CD4-positive, alpha-beta memory T cell (primary cell): ENCODE measurements at regions of chr22 and their contacts with region 1.

Region 1: DNA sequence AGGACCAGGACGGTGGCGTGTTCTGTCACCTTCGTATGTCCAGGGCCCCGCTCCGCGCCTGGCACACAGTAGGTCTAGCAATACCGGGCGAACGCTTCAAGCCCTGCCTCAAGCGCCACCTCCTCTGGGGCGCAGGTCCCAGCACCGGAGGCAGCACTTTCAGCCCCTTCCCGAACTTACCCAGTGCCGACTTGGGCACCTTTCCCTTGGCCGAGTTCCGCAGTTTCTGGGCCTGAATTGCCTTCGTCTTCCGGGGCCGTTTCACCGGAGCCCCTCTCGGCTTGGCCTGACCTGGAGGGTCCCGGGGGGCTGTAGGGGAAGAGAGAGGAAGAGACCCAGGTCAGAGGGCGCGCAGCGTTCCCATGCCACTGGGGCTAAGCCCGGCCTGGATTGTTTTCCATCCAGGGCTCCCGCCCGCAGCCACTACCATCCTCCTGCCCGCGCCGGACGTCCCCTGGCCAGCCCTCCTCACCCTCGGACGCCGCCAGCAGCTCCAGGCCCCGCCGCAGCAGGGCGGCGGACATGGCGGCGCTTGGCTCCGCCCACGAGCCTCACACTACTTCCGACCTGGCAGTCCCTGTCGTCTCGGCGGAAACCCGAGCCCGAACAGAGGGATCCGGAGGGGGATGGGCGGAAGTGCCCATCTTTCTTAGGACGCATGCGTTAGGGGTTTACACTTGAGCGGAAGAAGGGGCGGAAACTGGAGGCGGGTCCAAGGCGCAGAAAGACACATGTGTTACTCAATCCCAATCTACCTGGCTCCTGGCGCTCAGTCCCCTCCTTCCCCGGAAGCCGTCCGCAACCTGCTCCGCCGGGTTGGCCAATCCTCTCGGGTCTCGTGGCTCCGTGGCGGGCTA is at the start of gene RPS19BP1:
- DNase-seq: peak; percentile 98 to 100 (median 99)
- H3K4me3 ChIP-seq: peak within 1 kb of the TSS; percentile 71 to 91
- H3K4me3 Mint-ChIP-seq: peak within 1 kb of the TSS; percentile 92 to 98 (median 96)
- H3K27ac ChIP-seq: peak within 1 kb of the TSS; percentile 93
- H3K27ac Mint-ChIP-seq: peak within 1 kb of the TSS; percentile 93 to 100 (median 97)
- H3K4me1 ChIP-seq: peaks cover 56% of the 10 kb centered on the region
- H3K4me1 Mint-ChIP-seq: peaks cover 35 to 61% (median 51%) of the 10 kb centered on the region in 4 donors
- H3K27me3 ChIP-seq: no peaks in the 10 kb centered on the region
- H3K27me3 Mint-ChIP-seq: no peaks in the 10 kb centered on the region
- total RNA-seq, gene RPS19BP1: 66.9 to 67.1 TPM

Region 2: DNA sequence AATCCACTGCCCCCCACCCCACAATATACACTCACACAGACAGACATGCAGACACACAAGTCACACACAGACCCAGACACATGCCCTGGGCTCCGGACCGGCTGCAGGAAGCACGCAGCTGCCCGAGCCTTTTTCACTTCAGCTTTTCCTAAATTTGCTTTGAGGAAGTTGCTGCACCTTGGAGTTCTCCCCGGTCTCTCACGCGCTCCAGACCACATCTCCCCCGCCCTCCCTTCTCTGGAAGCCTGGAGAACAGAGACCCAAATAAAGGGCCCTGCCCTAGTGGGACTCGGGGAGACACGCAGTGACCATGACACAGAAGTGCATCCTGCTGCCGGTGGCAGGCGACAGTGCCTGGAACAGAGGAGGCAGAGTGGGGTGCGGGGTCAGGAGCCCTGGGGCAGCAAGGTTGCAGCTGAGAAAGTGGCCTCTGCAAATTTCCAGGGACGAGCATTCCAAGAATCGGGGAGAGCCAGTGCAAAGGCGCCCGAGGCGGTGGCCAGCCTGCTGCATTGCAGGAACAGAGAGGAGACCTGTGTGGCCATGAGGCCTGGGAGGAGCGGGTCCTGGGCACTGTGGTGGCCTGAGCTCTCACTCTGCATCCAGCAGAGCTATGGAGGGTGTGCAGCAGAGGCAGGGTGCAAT is 232.1 kb before region 1 on chr22:
- CTCF ChIA-PET with region 1: no interaction called
- POLR2A ChIA-PET with region 1: no interaction called
- intact Hi-C with region 1: no loop called
- DNase-seq: no peak
- H3K4me3 ChIP-seq: no peak overlapping the region
- H3K4me3 Mint-ChIP-seq: no peak overlapping the region
- H3K27ac ChIP-seq: no peak overlapping the region
- H3K27ac Mint-ChIP-seq: no peak overlapping the region
- H3K4me1 ChIP-seq: peaks cover 6% of the 10 kb centered on the region
- H3K4me1 Mint-ChIP-seq: peaks cover 2 to 12% (median 7%) of the 10 kb centered on the region in 4 donors
- H3K27me3 ChIP-seq: no peaks in the 10 kb centered on the region
- H3K27me3 Mint-ChIP-seq: peaks cover 15 to 20% of the 10 kb centered on the region in 2 donors

Region 3: DNA sequence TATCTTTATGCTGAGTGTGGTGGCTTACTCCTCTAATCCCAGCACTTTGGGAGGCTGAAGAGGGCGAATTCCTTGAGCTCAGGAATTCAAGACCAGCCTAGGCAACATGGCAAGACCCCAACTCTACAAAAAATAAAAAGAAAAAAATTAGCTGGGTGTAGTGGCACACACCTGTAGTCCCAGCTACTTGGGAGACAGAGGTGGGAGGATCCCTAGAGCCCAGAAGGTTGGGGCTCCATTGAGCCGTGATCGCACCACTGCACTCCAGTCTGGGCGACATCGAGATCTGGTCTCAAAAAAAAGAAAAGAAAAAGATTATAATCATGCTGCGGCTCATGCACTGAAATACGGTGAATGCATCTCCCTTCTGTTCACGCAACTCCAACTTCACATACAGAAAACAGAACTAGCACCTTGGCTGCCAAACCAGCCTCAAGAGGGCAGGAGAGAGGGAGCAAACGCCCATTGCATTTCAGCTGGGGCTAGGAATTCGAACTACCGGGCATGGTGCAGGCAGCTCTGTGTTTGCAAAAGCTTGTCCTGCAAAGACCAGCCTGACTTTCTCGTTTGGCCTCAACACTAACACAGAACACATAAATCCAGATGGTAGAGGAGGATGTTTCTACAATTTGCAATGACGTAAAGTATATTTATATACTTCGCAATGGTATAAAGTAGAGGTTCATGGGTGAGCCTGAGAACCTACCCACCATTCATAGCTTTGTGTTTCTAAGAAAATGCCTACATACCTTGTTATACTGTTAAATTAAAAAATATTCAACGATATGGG is 189.0 kb before region 1 on chr22:
- CTCF ChIA-PET with region 1: interaction called, 21 read pairs
- POLR2A ChIA-PET with region 1: interaction called, 7 read pairs
- intact Hi-C with region 1: loop called (anchors 1 kb)
- DNase-seq: peak; percentile 40 to 56 (median 46)
- H3K4me3 ChIP-seq: no peak overlapping the region
- H3K4me3 Mint-ChIP-seq: no peak overlapping the region
- H3K27ac ChIP-seq: no peak overlapping the region
- H3K27ac Mint-ChIP-seq: no peak overlapping the region
- H3K4me1 ChIP-seq: peaks cover 5% of the 10 kb centered on the region
- H3K4me1 Mint-ChIP-seq: peaks cover 4 to 5% (median 4%) of the 10 kb centered on the region in 4 donors
- H3K27me3 ChIP-seq: no peaks in the 10 kb centered on the region
- H3K27me3 Mint-ChIP-seq: peaks cover 5 to 7% of the 10 kb centered on the region in 2 donors

Region 4: DNA sequence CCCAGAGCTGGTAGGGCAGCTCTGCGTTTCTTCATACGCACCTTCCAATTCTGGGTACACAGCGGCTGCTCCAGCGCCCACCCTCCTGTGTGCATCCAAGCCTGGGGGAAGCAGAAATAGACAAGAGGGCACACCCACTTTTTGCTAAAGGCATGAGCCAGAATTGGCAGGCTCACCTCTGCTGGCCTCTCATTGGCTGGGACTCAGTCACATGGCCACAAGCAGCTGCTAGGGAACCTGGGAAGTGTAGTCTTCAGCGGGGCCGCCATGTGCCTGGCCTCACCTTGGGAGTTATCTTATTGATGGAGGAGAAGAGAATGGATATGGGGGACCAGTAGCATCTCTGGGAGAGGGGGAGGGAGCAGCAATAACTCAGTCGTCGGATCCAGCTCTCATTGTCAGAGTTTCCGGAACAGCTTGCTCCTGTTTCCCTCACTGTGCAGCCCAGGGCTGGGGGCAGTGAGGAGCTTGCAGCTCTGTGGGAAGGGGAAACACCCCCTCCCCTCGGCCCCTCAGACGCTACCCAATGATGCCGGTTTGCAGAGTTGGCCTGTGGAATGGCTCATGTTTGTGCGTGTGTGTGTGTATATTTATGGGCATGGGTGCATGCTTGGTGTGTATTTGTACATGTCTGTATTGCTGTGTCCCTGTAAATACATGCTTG is 42.2 kb before region 1 on chr22:
- CTCF ChIA-PET with region 1: interaction called, 345 read pairs
- POLR2A ChIA-PET with region 1: interaction called, 38 read pairs
- intact Hi-C with region 1: loop called (anchors 1 kb)
- DNase-seq: peak; percentile 66 to 83 (median 77)
- H3K4me3 ChIP-seq: no peak overlapping the region
- H3K4me3 Mint-ChIP-seq: peak overlapping the region in 2 of 8 donors; percentile 17 to 71
- H3K27ac ChIP-seq: no peak overlapping the region
- H3K27ac Mint-ChIP-seq: peak overlapping the region in 6 of 7 donors; percentile 10 to 81 (median 44)
- H3K4me1 ChIP-seq: peaks cover 6% of the 10 kb centered on the region
- H3K4me1 Mint-ChIP-seq: peaks cover 5 to 13% (median 9%) of the 10 kb centered on the region in 4 donors
- H3K27me3 ChIP-seq: no peaks in the 10 kb centered on the region
- H3K27me3 Mint-ChIP-seq: no peaks in the 10 kb centered on the region

Region 5: GRCh38 chr22:39514373-39514973 is 18.0 kb before region 1 on chr22:
- CTCF ChIA-PET with region 1: interaction called, 100 read pairs
- POLR2A ChIA-PET with region 1: interaction called, 157 read pairs
- intact Hi-C with region 1: no loop called
- DNase-seq: peak in 3 of 5 donors; percentile 33 to 44 (median 36)
- H3K4me3 ChIP-seq: no peak overlapping the region
- H3K4me3 Mint-ChIP-seq: no peak overlapping the region
- H3K27ac ChIP-seq: no peak overlapping the region
- H3K27ac Mint-ChIP-seq: peak overlapping the region in 4 of 7 donors; percentile 4 to 79 (median 17)
- H3K4me1 ChIP-seq: peaks cover 14% of the 10 kb centered on the region
- H3K4me1 Mint-ChIP-seq: peaks cover 11 to 30% (median 17%) of the 10 kb centered on the region in 4 donors
- H3K27me3 ChIP-seq: no peaks in the 10 kb centered on the region
- H3K27me3 Mint-ChIP-seq: no peaks in the 10 kb centered on the region

Region 6: DNA sequence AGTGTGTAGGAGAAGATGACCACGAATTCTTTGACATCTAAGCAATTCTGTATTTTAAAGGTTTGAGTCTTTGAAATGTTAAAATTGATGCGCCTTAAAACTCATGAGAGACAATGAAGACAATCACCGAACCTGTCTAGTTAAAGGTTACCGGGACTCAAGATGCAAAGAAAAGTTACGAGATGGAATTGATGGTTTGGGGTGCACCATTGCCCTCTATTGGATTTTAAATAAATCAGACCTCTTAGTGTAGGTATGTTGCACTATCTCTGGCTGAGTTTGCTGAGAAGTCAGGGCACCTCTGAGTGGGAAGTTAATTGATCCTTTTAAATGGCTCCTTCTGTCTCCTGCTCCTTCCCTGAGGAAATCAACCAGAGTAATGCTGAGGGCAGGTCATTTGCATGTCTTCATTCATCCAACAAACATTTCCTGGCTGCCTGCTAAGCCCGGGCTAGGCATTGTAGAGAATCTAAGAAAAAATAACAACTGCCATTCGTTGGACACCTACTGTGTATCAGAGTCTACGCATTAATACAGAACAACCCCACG is 408.4 kb after region 1 on chr22:
- CTCF ChIA-PET with region 1: interaction called, 19 read pairs
- POLR2A ChIA-PET with region 1: no interaction called
- intact Hi-C with region 1: loop called (anchors 1 kb)
- DNase-seq: peak; percentile 60 to 72 (median 67)
- H3K4me3 ChIP-seq: no peak overlapping the region
- H3K4me3 Mint-ChIP-seq: peak overlapping the region in 7 of 8 donors; percentile 26 to 79 (median 57)
- H3K27ac ChIP-seq: peak overlapping the region; percentile 29
- H3K27ac Mint-ChIP-seq: peak overlapping the region in 6 of 7 donors; percentile 48 to 91 (median 89)
- H3K4me1 ChIP-seq: peaks cover 100% of the 10 kb centered on the region
- H3K4me1 Mint-ChIP-seq: peaks cover 78 to 96% (median 87%) of the 10 kb centered on the region in 4 donors
- H3K27me3 ChIP-seq: no peaks in the 10 kb centered on the region
- H3K27me3 Mint-ChIP-seq: no peaks in the 10 kb centered on the region

Region 7: GRCh38 chr22:40036591-40037225 is 504.3 kb after region 1 on chr22:
- CTCF ChIA-PET with region 1: interaction called, 14 read pairs
- POLR2A ChIA-PET with region 1: interaction called, 4 read pairs
- intact Hi-C with region 1: no loop called
- DNase-seq: peak in 4 of 5 donors; percentile 29 to 40 (median 34)
- H3K4me3 ChIP-seq: no peak overlapping the region
- H3K4me3 Mint-ChIP-seq: no peak overlapping the region
- H3K27ac ChIP-seq: no peak overlapping the region
- H3K27ac Mint-ChIP-seq: no peak overlapping the region
- H3K4me1 ChIP-seq: no peaks in the 10 kb centered on the region
- H3K4me1 Mint-ChIP-seq: peaks cover 0 to 2% (median under 1%) of the 10 kb centered on the region in 4 donors
- H3K27me3 ChIP-seq: no peaks in the 10 kb centered on the region
- H3K27me3 Mint-ChIP-seq: peaks cover 11 to 19% of the 10 kb centered on the region in 2 donors